Heart right ventricle (tissue), 16 donors: ENCODE measurements at regions of chr6 and their contacts with region 1.

Region 1: DNA sequence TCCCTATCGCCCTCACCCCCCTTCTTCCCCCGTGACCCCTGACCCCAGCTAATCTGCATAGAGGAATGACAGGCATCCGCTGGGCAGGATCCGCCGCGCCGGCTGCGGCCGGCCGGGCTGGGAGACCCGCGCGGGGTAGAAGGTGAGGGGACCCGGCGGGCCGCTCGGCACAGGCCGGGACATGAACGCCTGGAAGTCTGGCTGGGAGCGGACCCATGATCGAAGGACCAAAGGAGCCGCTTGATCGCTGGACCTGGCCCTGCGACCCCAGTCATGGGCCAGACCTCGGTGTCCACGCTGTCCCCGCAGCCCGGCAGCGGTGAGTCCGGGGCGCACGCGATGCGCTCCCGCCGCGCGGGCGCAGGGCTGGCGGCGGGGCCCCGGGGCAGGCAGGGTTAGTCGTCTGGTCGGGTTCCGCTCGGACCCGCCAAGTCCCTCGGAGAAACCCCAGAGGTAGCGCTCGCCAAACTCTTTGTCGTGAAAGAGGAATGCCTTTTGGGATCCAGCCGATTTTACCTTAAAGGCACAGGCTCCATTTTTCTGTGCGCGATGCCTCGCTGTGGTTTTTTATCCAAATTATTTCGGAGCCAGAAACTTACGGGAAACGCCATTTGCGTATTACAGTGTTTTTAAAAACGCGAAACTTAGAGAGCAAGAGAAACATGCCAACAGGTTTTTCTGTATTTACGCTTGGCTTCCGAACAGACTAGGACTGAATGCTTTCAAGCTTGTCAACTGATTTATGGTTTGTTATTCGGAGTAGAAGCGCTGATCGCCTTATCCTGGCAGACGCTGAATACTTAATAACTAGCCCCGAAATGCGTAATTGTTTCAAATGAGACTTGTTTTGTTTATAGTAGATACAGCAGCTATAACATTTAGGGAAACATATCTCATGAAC is at the start of gene PHACTR2:
- DNase-seq: peak; percentile 79 to 86
- ATAC-seq: peak; percentile 88 to 98 (median 92)
- H3K4me3 ChIP-seq: peak within 1 kb of the TSS; percentile 56 to 83 (median 78)
- H3K27ac ChIP-seq: peak within 1 kb of the TSS; percentile 92 to 99 (median 98)
- H3K4me1 ChIP-seq: peaks cover 0 to 68% (median 43%) of the 10 kb centered on the region in 9 donors
- H3K27me3 ChIP-seq: no peaks in the 10 kb centered on the region
- CTCF ChIP-seq: no peak
- total RNA-seq, gene PHACTR2: 50.9 to 96.3 (median 72.6) TPM

Region 2: DNA sequence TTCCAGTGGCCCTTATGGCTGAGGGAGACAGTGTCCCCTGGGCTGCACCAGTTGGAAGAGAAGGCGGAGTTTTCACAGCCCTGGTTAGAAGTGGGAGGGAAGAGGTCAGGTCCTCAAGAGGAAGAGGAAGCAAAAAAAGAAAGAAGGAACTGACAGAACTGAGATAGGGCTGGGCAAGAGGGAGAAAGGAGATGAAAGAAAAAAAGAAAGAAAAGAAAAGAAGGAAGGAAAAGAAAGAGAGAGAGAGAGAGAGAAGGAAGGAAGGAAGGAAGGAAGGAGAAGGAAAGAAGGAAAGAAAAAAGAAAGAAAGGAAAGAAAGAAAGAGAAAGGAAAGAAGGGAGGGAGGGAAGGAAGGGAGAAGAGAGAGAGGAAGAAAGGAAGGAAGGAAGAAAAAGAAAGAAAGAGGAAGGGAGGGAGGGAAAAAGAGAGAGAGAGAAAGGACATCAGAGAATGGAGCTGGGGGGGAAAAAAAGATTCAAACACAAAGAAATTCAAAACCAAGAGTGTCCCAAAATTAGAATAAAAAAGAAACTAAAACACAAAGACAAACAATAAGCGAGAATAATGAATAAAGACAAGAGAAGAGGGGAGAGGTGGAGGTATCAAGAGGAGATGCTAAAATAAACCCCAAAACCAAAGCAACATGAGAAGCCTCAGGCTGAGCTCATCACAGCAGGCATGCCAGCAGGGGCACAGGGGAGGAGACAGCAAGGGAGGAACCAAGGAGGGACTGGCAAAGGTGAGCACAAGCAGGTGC is 161.3 kb before region 1 on chr6:
- intact Hi-C with region 1: no loop called
- DNase-seq: no peak
- ATAC-seq: no peak
- H3K4me3 ChIP-seq: no peak overlapping the region
- H3K27ac ChIP-seq: peak overlapping the region in 4 of 10 donors; percentile 56 to 83 (median 81)
- H3K4me1 ChIP-seq: peaks cover 1 to 36% (median 18%) of the 10 kb centered on the region in 9 donors
- H3K27me3 ChIP-seq: no peaks in the 10 kb centered on the region
- CTCF ChIP-seq: no peak

Region 3: DNA sequence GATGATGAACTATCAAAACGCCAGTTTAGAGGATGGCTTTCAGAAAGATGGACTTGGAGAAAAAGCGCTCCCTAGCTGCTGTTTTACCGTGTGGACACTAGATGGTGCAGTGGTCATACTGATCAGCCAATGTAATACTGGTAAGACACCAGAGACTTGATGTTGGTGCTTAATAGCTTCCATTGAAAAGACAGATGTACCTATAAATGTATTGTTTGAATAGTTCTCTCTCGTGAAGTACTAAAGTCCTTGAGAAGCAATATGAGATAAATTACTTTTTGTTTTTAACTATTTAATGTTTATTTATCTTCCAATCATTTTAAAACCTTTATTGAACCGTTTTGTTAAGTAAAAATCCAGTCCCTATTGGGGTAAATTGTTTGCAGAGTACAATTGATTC is 102.7 kb before region 1 on chr6:
- intact Hi-C with region 1: loop called in 1 of 10 experiments (anchors 5 kb)
- DNase-seq: peak in 1 of 2 donors; percentile 67
- ATAC-seq: peak; percentile 70 to 92 (median 88)
- H3K4me3 ChIP-seq: no peak overlapping the region
- H3K27ac ChIP-seq: peak overlapping the region in 4 of 10 donors; percentile 18 to 59 (median 38)
- H3K4me1 ChIP-seq: peaks cover 0 to 16% (median 0%) of the 10 kb centered on the region in 9 donors
- H3K27me3 ChIP-seq: no peaks in the 10 kb centered on the region
- CTCF ChIP-seq: peak; percentile 74 to 97 (median 91)

Region 4: DNA sequence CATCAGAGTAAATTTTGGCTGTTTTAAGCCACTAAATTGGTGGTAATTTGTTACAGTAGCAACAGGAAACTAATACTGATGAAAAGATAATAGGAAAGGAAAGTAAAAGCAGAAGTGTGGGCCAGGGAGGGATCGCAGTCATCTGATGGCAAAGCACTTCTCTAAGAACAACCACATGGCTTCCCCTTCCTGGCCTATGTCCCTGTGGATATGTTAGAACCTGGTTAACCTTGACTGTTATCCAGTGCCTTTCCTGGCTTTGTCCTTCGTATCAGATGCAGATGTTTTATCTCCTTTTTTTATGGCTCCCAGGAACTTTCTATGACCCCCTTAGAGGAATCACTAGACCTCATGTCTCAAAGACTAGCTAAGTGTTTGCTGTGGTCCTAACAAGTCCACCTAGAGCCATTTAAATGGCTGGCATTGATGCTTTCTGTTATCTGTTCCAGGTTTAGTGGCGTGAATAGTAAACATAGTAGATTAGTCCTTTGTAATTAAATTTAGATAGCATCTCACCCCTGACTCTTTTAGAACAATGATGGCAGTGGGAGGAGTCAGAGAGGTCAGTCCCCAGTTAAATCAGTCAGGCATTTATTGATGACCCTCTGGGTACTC is 79.6 kb before region 1 on chr6:
- intact Hi-C with region 1: loop called in 1 of 10 experiments (anchors 5 kb)
- DNase-seq: peak in 1 of 2 donors; percentile 18
- ATAC-seq: peak in 7 of 8 donors; percentile 57 to 88 (median 76)
- H3K4me3 ChIP-seq: no peak overlapping the region
- H3K27ac ChIP-seq: peak overlapping the region in 7 of 10 donors; percentile 0 to 73 (median 37)
- H3K4me1 ChIP-seq: peaks cover 7 to 51% (median 37%) of the 10 kb centered on the region in 9 donors
- H3K27me3 ChIP-seq: no peaks in the 10 kb centered on the region
- CTCF ChIP-seq: no peak

Region 5: GRCh38 chr6:143734641-143735063 is 56.5 kb after region 1 on chr6:
- intact Hi-C with region 1: loop called in 3 of 10 experiments (anchors 2 to 5 kb)
- DNase-seq: no peak
- ATAC-seq: peak in 7 of 8 donors; percentile 37 to 86 (median 68)
- H3K4me3 ChIP-seq: peak overlapping the region in 1 of 10 donors; percentile 14
- H3K27ac ChIP-seq: peak overlapping the region in 6 of 10 donors; percentile 2 to 65 (median 26)
- H3K4me1 ChIP-seq: peaks cover 0 to 81% (median 41%) of the 10 kb centered on the region in 9 donors
- H3K27me3 ChIP-seq: no peaks in the 10 kb centered on the region
- CTCF ChIP-seq: no peak

Region 6: GRCh38 chr6:143745166-143746133 is 67.3 kb after region 1 on chr6:
- intact Hi-C with region 1: loop called in 3 of 10 experiments (anchors 5 kb)
- DNase-seq: peak in 1 of 2 donors; percentile 52
- ATAC-seq: peak; percentile 26 to 77 (median 61)
- H3K4me3 ChIP-seq: peak overlapping the region in 6 of 10 donors; percentile 2 to 19 (median 14)
- H3K27ac ChIP-seq: peak overlapping the region; percentile 31 to 85 (median 68)
- H3K4me1 ChIP-seq: peaks cover 21 to 91% (median 69%) of the 10 kb centered on the region in 9 donors
- H3K27me3 ChIP-seq: no peaks in the 10 kb centered on the region
- CTCF ChIP-seq: no peak